HCT116 (cell line): ENCODE measurements at regions of chr22 and their contacts with region 1.

Region 1: DNA sequence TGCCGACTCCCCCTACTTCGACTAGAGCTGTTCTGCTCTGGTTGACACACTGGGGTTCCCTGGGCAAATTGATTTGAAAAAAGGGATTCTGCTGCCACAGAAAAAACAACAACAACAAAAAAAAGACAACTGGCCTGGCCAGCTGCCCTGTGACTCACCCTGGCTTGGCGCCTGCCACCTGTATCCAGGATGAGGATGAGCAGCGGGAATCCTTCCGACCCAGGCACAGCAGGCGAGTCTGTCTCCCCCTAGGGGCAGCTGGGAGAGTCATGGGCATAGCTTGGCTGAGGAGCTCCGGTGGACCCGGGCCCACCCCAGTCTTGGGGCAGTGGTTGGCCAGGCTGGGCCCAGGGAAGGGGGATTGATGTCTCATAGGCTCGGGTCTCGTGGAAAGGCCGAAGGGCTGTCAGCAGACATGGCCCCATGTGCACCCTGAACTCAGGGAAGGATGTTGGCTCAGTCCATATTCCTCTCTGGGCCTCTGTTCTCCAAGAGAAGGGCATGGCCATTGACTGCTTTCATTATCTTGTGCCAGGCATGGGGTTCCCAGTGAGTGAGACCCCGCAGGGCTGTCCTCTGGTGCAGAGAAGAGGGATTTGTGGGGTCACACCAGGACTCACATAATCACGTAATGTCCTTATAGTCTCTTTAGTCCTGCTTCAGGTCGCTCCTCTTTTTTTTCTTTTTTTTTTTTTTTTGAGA is 10.4 kb upstream of the SUN2 start:
- DNase-seq: peak; percentile 79
- ATAC-seq: peak; percentile 89
- H3K4me3 ChIP-seq: no peak overlapping the region
- H3K27ac ChIP-seq: peak overlapping the region; percentile 52; the same call in 1 of the 2 replicates
- H3K4me1 ChIP-seq: peaks cover 26 to 37% of the 10 kb centered on the region in 2 experiments
- H3K27me3 ChIP-seq: no peaks in the 10 kb centered on the region
- CTCF ChIP-seq: peak; percentile 73 to 98 (median 93)
- POLR2A ChIP-seq: no peak
- RAD21 ChIP-seq: peak; percentile 82

Region 2: GRCh38 chr22:38724926-38725571 is 41.2 kb before region 1 on chr22:
- CTCF ChIA-PET with region 1: interaction called, 10 read pairs
- POLR2A ChIA-PET with region 1: no interaction called
- RAD21 ChIA-PET with region 1: interaction called in 1 of 2 experiments, 3 read pairs
- intact Hi-C with region 1: no loop called
- DNase-seq: no peak
- ATAC-seq: peak; percentile 89
- H3K4me3 ChIP-seq: no peak overlapping the region
- H3K27ac ChIP-seq: no peak overlapping the region
- H3K4me1 ChIP-seq: no peaks in the 10 kb centered on the region
- H3K27me3 ChIP-seq: no peaks in the 10 kb centered on the region
- CTCF ChIP-seq: peak in 2 of 3 experiments; percentile 70 to 74; a peak in 4 of 6 replicates
- POLR2A ChIP-seq: no peak
- RAD21 ChIP-seq: peak; percentile 24; the same call in 1 of the 2 replicates

Region 3: DNA sequence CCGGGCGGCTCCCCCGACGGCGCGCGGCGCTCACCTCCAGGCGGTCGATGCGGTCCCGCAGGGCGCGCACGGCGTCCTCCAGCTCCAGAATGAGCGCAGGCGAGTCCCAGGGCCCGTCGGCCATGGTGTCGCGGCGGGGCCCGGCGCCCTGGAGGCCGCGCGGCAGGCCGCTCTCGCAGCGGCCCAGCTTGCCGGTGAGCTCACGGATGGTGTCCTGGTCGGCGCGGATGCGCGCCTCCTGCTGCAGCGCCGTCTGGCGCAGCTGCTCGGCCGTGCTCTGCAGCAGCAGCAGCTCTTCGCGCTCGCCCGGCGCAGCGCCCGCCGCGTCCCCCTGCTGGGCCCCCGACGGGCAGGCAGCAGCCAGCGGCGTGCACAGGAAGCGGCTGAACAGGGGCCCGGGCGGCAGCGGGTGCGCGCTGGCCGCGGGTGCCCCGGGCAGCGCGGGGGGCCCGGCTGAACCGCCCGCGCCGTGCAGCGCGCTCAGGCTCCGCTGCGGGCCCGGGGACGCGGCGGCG is 77.0 kb after region 1 on chr22:
- CTCF ChIA-PET with region 1: interaction called, 16 read pairs
- POLR2A ChIA-PET with region 1: no interaction called
- RAD21 ChIA-PET with region 1: interaction called, 3 to 5 read pairs
- intact Hi-C with region 1: loop called (anchors 5 kb)
- DNase-seq: no peak
- ATAC-seq: peak; percentile 77
- H3K4me3 ChIP-seq: peak overlapping the region; percentile 35 to 64
- H3K27ac ChIP-seq: peak overlapping the region; percentile 82
- H3K4me1 ChIP-seq: peaks cover 23 to 40% of the 10 kb centered on the region in 2 experiments
- H3K27me3 ChIP-seq: no peaks in the 10 kb centered on the region
- CTCF ChIP-seq: peak in 2 of 3 experiments; percentile 14 to 28; a peak in 3 of 6 replicates
- POLR2A ChIP-seq: no peak
- RAD21 ChIP-seq: no peak

Region 4: DNA sequence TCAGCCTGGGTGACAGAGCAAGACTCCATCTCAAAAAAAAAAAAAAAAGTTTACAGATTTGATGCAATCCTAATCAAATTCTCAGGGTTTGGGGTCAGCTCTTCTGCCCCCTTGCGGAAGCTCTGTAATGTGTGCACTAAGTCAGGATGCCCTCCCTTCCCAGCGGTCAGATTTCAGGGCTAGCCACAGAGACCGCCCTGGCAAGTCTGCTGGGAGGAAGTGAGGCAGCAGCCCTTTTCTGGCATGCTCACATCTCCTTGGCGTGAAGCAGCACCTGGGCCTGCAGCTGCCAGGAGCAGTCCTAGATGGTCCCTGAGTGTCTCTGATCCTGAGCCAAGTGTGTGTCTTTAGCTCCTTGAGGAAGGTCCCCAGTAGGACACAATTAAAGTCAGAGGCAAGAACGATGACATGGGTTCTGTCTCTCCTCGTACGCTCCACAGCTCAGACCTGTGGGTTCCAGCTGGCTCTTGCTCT is 237.0 kb after region 1 on chr22:
- CTCF ChIA-PET with region 1: interaction called, 35 read pairs
- POLR2A ChIA-PET with region 1: interaction called, 8 read pairs
- RAD21 ChIA-PET with region 1: interaction called, 7 to 11 read pairs
- intact Hi-C with region 1: loop called (anchors 1 kb)
- DNase-seq: peak; percentile 80
- ATAC-seq: peak; percentile 97
- H3K4me3 ChIP-seq: no peak overlapping the region
- H3K27ac ChIP-seq: peak overlapping the region; percentile 3; the same call in 1 of the 2 replicates
- H3K4me1 ChIP-seq: peaks cover 7 to 13% of the 10 kb centered on the region in 2 experiments; a peak in 3 of 4 replicates
- H3K27me3 ChIP-seq: no peaks in the 10 kb centered on the region
- CTCF ChIP-seq: peak; percentile 72 to 92 (median 75)
- POLR2A ChIP-seq: no peak
- RAD21 ChIP-seq: peak; percentile 86

Region 5: DNA sequence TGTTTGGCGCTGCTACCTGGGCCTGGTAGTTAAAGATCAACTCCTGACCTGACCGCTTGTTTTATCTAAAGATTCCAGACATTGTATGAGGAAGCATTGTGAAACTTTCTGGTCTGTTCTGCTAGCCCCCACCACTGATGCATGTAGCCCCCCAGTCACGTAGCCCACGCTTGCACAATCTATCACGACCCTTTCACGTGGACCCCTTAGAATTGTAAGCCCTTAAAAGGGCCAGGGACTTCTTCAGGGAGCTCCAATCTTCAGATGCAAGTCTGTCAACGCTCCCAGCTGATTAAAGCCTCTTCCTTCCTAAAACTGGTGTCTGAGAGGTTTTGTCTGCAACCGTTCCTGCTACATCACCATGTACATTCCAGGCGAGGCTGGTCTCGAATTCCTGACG is 289.4 kb after region 1 on chr22:
- CTCF ChIA-PET with region 1: no interaction called
- POLR2A ChIA-PET with region 1: no interaction called
- RAD21 ChIA-PET with region 1: no interaction called
- intact Hi-C with region 1: no loop called
- DNase-seq: no peak
- ATAC-seq: no peak
- H3K4me3 ChIP-seq: no peak overlapping the region
- H3K27ac ChIP-seq: no peak overlapping the region
- H3K4me1 ChIP-seq: peaks cover 14 to 18% of the 10 kb centered on the region in 2 experiments
- H3K27me3 ChIP-seq: no peaks in the 10 kb centered on the region
- CTCF ChIP-seq: no peak
- POLR2A ChIP-seq: no peak
- RAD21 ChIP-seq: no peak

Region 6: DNA sequence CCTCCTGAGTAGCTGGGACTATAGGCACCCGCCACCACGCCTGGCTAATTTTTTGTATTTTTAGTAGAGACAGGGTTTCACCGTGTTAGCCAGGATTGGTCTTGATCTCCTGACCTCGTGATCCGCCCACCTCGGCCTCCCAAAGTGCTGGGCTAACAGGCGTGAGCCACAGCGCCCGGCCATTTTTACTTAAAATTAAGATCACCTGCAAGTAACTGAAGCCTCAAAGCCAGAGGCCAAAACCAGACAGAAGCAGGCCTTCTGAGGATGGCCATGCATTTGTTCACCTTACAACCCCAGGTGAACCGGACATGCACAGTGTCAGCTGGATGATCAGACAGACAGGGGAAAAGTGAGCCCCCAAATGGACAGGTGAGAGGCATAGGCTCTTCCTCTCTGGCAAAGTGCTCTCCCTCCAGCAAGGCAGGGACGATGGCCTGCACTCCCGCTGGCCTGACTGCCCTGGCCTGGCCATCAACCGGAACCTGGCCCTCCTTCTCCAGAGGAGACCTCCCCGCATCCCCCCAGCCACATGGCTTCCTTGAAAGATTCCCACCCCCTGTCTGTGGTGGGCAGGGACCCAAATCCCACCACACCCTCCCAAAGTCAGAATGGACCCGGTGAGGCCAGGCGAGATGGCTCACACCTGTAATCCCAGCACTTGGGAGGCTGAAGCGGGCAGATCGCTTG is 356.7 kb after region 1 on chr22:
- CTCF ChIA-PET with region 1: interaction called, 14 read pairs
- POLR2A ChIA-PET with region 1: no interaction called
- RAD21 ChIA-PET with region 1: no interaction called
- intact Hi-C with region 1: loop called (anchors 2 kb)
- DNase-seq: no peak
- ATAC-seq: no peak
- H3K4me3 ChIP-seq: no peak overlapping the region
- H3K27ac ChIP-seq: no peak overlapping the region
- H3K4me1 ChIP-seq: no peaks in the 10 kb centered on the region
- H3K27me3 ChIP-seq: no peaks in the 10 kb centered on the region
- CTCF ChIP-seq: no peak
- POLR2A ChIP-seq: no peak
- RAD21 ChIP-seq: no peak

Region 7: DNA sequence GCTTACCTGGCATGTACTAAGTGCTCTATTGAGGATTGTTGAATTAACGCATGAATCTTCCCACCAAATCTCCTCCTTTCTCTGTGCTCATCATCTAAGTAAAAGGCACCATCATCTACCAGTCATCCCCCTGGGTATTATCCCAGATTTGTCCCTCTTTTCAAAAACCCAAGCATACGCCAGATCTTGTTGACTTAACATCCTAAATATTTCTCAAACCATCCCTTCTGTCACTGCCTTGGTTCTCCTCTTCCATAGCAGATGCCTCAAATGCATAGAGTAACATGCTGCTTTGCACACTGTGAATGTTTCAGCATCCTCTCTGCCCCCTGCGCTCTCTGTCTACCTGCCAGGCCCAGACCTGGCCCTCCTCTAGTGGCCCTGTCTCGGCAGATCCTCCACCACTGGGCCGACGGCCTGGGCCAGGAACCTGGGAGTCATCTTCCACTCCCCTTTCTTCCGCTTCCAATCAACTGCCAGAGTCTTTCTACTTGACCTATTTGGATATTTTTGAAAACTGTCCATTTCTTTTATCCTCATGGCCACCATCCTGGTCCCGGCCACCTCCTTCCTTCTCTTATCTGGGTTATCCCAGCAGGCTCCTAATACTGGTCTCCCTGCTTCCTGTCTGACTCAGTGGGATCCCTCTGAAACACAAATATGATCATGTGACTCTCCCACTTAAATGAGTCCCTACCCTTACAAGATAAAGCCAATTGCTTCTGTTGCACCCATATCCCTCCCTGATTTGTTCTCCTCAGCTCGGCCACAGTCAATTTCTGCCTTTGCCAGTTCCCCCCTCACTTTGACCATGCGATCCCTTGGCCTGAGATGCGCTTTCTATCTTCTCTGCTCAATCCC is 629.9 kb after region 1 on chr22:
- CTCF ChIA-PET with region 1: no interaction called
- POLR2A ChIA-PET with region 1: no interaction called
- RAD21 ChIA-PET with region 1: no interaction called
- intact Hi-C with region 1: no loop called
- DNase-seq: no peak
- ATAC-seq: no peak
- H3K4me3 ChIP-seq: no peak overlapping the region
- H3K27ac ChIP-seq: no peak overlapping the region
- H3K4me1 ChIP-seq: peaks cover 0 to 11% of the 10 kb centered on the region in 2 experiments; a peak in 1 of 4 replicates
- H3K27me3 ChIP-seq: no peaks in the 10 kb centered on the region
- CTCF ChIP-seq: no peak
- POLR2A ChIP-seq: no peak
- RAD21 ChIP-seq: no peak